Activated CD4-positive, alpha-beta memory T cell treated with anti-CD3 and anti-CD28 coated beads for 36 hours (primary cell): ENCODE measurements at regions of chr11 and their contacts with region 1.

Region 1: GRCh38 chr11:15819679-15820286 is 536.6 kb downstream of the SOX6 start:
- DNase-seq: peak; percentile 60
- H3K4me3 Mint-ChIP-seq: no peak overlapping the region
- H3K27ac Mint-ChIP-seq: no peak overlapping the region
- H3K4me1 Mint-ChIP-seq: peaks cover 16% of the 10 kb centered on the region
- H3K27me3 Mint-ChIP-seq: peaks cover 2% of the 10 kb centered on the region

Region 2: GRCh38 chr11:15650105-15650938 is 169.5 kb before region 1 on chr11:
- CTCF ChIA-PET with region 1: interaction called, 3 read pairs
- POLR2A ChIA-PET with region 1: no interaction called
- intact Hi-C with region 1: loop called (anchors 1 kb)
- DNase-seq: peak; percentile 82
- H3K4me3 Mint-ChIP-seq: no peak overlapping the region
- H3K27ac Mint-ChIP-seq: no peak overlapping the region
- H3K4me1 Mint-ChIP-seq: peaks cover 3% of the 10 kb centered on the region
- H3K27me3 Mint-ChIP-seq: peaks cover 17% of the 10 kb centered on the region

Region 3: DNA sequence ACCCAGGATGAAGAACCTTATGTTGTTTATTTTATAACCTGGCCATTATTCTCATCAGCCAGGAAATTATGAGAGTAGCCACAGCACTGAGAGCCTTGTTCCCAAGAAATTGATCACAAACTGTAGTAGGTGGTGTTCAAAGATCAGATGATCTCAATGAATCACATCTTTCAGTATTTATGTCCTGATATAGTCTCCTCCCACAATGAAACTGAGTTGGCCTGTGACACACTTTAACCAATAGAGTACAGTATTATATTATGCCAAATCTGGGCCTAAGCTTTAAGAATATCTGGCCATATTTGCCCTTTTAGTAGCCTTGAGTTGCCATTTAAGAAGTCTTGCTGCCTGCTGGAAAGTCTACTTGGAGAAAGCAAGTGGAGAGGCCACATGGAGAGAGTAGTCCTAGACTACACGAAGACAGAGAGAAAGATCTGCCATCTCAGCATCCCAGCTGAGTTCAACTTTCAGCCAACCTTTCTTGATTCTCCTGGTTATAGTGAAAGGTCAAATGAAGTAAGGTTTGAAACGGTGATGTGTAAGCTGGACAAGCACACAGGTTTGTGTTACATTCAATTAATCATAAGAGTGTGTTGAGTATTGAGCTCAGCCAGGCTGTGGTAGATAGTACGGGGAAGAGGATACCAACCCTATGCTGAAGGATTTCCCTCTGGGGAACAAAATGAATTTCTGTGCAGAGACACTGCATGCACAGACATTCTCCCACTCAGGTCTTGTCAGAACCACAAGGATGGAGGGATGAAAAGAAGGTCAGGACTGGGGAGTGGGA is 25.2 kb before region 1 on chr11:
- CTCF ChIA-PET with region 1: interaction called, 5 read pairs
- POLR2A ChIA-PET with region 1: no interaction called
- intact Hi-C with region 1: loop called (anchors 1 kb)
- DNase-seq: no peak
- H3K4me3 Mint-ChIP-seq: no peak overlapping the region
- H3K27ac Mint-ChIP-seq: peak overlapping the region; percentile 19
- H3K4me1 Mint-ChIP-seq: peaks cover 11% of the 10 kb centered on the region
- H3K27me3 Mint-ChIP-seq: no peaks in the 10 kb centered on the region

Region 4: GRCh38 chr11:15800111-15800800 is 19.5 kb before region 1 on chr11:
- CTCF ChIA-PET with region 1: interaction called, 5 read pairs
- POLR2A ChIA-PET with region 1: interaction called, 6 read pairs
- intact Hi-C with region 1: loop called (anchors 1 kb)
- DNase-seq: peak; percentile 43
- H3K4me3 Mint-ChIP-seq: no peak overlapping the region
- H3K27ac Mint-ChIP-seq: peak overlapping the region; percentile 88
- H3K4me1 Mint-ChIP-seq: peaks cover 24% of the 10 kb centered on the region
- H3K27me3 Mint-ChIP-seq: no peaks in the 10 kb centered on the region

Region 5: GRCh38 chr11:15852179-15852578 is 32.4 kb after region 1 on chr11:
- CTCF ChIA-PET with region 1: no interaction called
- POLR2A ChIA-PET with region 1: no interaction called
- intact Hi-C with region 1: no loop called
- DNase-seq: no peak
- H3K4me3 Mint-ChIP-seq: no peak overlapping the region
- H3K27ac Mint-ChIP-seq: no peak overlapping the region
- H3K4me1 Mint-ChIP-seq: no peaks in the 10 kb centered on the region
- H3K27me3 Mint-ChIP-seq: peaks cover 3% of the 10 kb centered on the region

Region 6: GRCh38 chr11:16160146-16160545 is 340.4 kb after region 1 on chr11:
- CTCF ChIA-PET with region 1: no interaction called
- POLR2A ChIA-PET with region 1: no interaction called
- intact Hi-C with region 1: no loop called
- DNase-seq: no peak
- H3K4me3 Mint-ChIP-seq: no peak overlapping the region
- H3K27ac Mint-ChIP-seq: no peak overlapping the region
- H3K4me1 Mint-ChIP-seq: no peaks in the 10 kb centered on the region
- H3K27me3 Mint-ChIP-seq: no peaks in the 10 kb centered on the region